HepG2 (cell line): ENCODE measurements at regions of chr6 and their contacts with region 1.

Region 1: DNA sequence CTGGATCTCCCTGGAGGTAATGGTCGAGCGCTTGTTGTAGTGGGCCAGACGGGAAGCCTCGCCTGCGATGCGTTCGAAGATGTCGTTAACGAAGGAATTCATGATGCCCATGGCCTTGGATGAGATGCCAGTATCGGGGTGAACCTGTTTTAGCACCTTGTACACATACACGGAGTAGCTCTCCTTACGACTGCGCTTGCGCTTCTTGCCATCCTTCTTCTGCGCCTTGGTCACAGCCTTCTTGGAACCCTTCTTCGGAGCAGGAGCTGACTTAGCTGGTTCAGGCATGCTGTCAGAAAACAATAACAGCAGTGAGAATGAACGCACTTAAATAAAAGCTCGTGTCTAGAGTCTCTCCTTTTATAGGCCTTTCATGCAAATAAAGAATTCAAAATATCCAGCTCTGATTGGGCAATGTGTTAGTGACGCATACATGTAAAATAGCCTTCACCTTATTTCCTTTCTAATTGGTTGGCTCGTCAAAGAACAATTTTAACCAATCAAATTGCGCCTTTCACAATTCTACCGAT is 129.2 kb downstream of the HFE start:
- DNase-seq: peak; percentile 99
- ATAC-seq: peak; percentile 64
- H3K4me3 ChIP-seq: peak overlapping the region; percentile 60 to 75 (median 72)
- H3K27ac ChIP-seq: peak overlapping the region; percentile 89
- H3K4me1 ChIP-seq: peaks cover 30% of the 10 kb centered on the region
- H3K27me3 ChIP-seq: no peaks in the 10 kb centered on the region; a peak in 1 of 5 replicates
- CTCF ChIP-seq: no peak
- EP300 ChIP-seq: peak in 1 of 2 experiments; percentile 48; a peak in 1 of 4 replicates
- POLR2A ChIP-seq: peak; percentile 97 to 99
- RAD21 ChIP-seq: peak; percentile 26; the same call in 1 of the 2 replicates

Region 2: GRCh38 chr6:26003102-26003694 is 213.2 kb before region 1 on chr6:
- CTCF ChIA-PET with region 1: no interaction called
- POLR2A ChIA-PET with region 1: no interaction called
- in situ Hi-C with region 1: no loop called
- intact Hi-C with region 1: no loop called
- DNase-seq: peak; percentile 63
- ATAC-seq: peak; percentile 82
- H3K4me3 ChIP-seq: no peak overlapping the region
- H3K27ac ChIP-seq: no peak overlapping the region
- H3K4me1 ChIP-seq: no peaks in the 10 kb centered on the region
- H3K27me3 ChIP-seq: no peaks in the 10 kb centered on the region
- CTCF ChIP-seq: peak; percentile 79
- EP300 ChIP-seq: no peak
- POLR2A ChIP-seq: no peak
- RAD21 ChIP-seq: 0 out of 2 replicates have a peak, but pooled peaks have one; percentile 30

Region 3: GRCh38 chr6:26025894-26026832 is 190.3 kb before region 1 on chr6:
- CTCF ChIA-PET with region 1: no interaction called
- POLR2A ChIA-PET with region 1: interaction called, 40 read pairs
- in situ Hi-C with region 1: no loop called
- intact Hi-C with region 1: no loop called
- DNase-seq: peak; percentile 97
- ATAC-seq: peak; percentile 68
- H3K4me3 ChIP-seq: peak overlapping the region; percentile 59 to 80 (median 71)
- H3K27ac ChIP-seq: peak overlapping the region; percentile 93
- H3K4me1 ChIP-seq: peaks cover 62% of the 10 kb centered on the region
- H3K27me3 ChIP-seq: no peaks in the 10 kb centered on the region; a peak in 1 of 5 replicates
- CTCF ChIP-seq: peak; percentile 95
- EP300 ChIP-seq: peak in 1 of 2 experiments; percentile 54; a peak in 2 of 4 replicates
- POLR2A ChIP-seq: peak in 1 of 2 experiments; percentile 28; a peak in 1 of 4 replicates
- RAD21 ChIP-seq: peak; percentile 77

Region 4: GRCh38 chr6:26103770-26104456 is 112.5 kb before region 1 on chr6:
- CTCF ChIA-PET with region 1: no interaction called
- POLR2A ChIA-PET with region 1: interaction called, 46 read pairs
- in situ Hi-C with region 1: no loop called
- intact Hi-C with region 1: no loop called
- DNase-seq: peak; percentile 96
- ATAC-seq: peak; percentile 84
- H3K4me3 ChIP-seq: peak overlapping the region; percentile 64 to 79 (median 74)
- H3K27ac ChIP-seq: peak overlapping the region; percentile 92
- H3K4me1 ChIP-seq: peaks cover 29% of the 10 kb centered on the region
- H3K27me3 ChIP-seq: no peaks in the 10 kb centered on the region; a peak in 1 of 5 replicates
- CTCF ChIP-seq: peak; percentile 45
- EP300 ChIP-seq: peak; percentile 69 to 96; a peak in 3 of 4 replicates
- POLR2A ChIP-seq: peak; percentile 98 to 99
- RAD21 ChIP-seq: peak; percentile 52; the same call in 1 of the 2 replicates

Region 5: GRCh38 chr6:26187981-26188635 is 28.3 kb before region 1 on chr6:
- CTCF ChIA-PET with region 1: no interaction called
- POLR2A ChIA-PET with region 1: interaction called, 53 read pairs
- in situ Hi-C with region 1: no loop called
- intact Hi-C with region 1: no loop called
- DNase-seq: peak; percentile 76
- ATAC-seq: peak; percentile 63
- H3K4me3 ChIP-seq: peak overlapping the region; percentile 60 to 77 (median 62)
- H3K27ac ChIP-seq: peak overlapping the region; percentile 82
- H3K4me1 ChIP-seq: peaks cover 18% of the 10 kb centered on the region
- H3K27me3 ChIP-seq: no peaks in the 10 kb centered on the region
- CTCF ChIP-seq: no peak
- EP300 ChIP-seq: no peak
- POLR2A ChIP-seq: no peak
- RAD21 ChIP-seq: no peak

Region 6: GRCh38 chr6:26258200-26258977 is 42.0 kb after region 1 on chr6:
- CTCF ChIA-PET with region 1: no interaction called
- POLR2A ChIA-PET with region 1: interaction called, 14 read pairs
- in situ Hi-C with region 1: no loop called
- intact Hi-C with region 1: loop called (anchors 2 kb)
- DNase-seq: peak; percentile 47
- ATAC-seq: peak; percentile 55
- H3K4me3 ChIP-seq: peak overlapping the region; percentile 26 to 54 (median 43); a peak in 4 of 6 replicates
- H3K27ac ChIP-seq: peak overlapping the region; percentile 46
- H3K4me1 ChIP-seq: peaks cover 69% of the 10 kb centered on the region
- H3K27me3 ChIP-seq: no peaks in the 10 kb centered on the region
- CTCF ChIP-seq: peak; percentile 59
- EP300 ChIP-seq: no peak
- POLR2A ChIP-seq: no peak
- RAD21 ChIP-seq: no peak

Region 7: DNA sequence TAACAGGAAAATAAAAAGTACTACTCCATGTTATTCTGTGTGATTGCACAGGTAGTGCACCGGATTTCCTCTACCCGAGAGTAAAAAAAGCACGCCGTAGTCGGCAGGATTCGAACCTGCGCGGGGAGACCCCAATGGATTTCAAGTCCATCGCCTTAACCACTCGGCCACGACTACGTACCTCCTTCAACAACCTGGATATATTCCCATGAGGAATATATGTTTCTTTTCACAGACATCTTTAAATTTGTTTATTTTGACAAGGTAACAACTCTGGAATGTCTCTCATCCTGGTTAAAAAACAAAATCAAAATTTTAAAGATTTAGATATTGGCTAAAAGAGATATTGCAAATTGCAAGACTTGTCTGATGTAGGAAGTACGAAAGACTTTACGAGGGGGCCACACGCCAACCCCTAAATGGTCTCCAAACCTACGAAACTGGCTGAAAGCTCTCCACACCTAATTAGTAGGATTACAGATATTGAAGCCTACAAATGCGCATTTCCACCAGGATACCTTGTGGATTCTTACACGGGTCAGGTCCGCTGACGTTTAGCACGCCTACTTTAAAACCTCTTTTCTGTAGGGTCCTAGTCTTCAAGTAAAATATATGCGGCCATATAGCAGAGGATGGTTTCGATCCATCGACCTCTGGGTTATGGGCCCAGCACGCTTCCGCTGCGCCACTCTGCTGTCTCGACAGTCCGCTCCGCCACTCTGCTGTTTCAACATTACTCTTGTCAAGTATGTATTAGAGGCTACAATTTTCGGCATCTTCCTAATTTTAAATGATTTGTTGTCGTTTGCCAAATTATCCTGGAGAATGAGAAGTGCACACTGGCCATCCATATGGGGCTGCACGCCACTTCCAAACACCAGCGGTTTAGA is 96.3 kb after region 1 on chr6:
- CTCF ChIA-PET with region 1: no interaction called
- POLR2A ChIA-PET with region 1: interaction called, 7 read pairs
- in situ Hi-C with region 1: no loop called
- intact Hi-C with region 1: loop called (anchors 2 kb)
- DNase-seq: peak; percentile 92
- ATAC-seq: peak; percentile 77
- H3K4me3 ChIP-seq: peak overlapping the region; percentile 67 to 80 (median 67)
- H3K27ac ChIP-seq: peak overlapping the region; percentile 55
- H3K4me1 ChIP-seq: peaks cover 72% of the 10 kb centered on the region
- H3K27me3 ChIP-seq: no peaks in the 10 kb centered on the region
- CTCF ChIP-seq: no peak
- EP300 ChIP-seq: peak in 1 of 2 experiments; percentile 68; a peak in 2 of 4 replicates
- POLR2A ChIP-seq: no peak
- RAD21 ChIP-seq: no peak

Region 8: DNA sequence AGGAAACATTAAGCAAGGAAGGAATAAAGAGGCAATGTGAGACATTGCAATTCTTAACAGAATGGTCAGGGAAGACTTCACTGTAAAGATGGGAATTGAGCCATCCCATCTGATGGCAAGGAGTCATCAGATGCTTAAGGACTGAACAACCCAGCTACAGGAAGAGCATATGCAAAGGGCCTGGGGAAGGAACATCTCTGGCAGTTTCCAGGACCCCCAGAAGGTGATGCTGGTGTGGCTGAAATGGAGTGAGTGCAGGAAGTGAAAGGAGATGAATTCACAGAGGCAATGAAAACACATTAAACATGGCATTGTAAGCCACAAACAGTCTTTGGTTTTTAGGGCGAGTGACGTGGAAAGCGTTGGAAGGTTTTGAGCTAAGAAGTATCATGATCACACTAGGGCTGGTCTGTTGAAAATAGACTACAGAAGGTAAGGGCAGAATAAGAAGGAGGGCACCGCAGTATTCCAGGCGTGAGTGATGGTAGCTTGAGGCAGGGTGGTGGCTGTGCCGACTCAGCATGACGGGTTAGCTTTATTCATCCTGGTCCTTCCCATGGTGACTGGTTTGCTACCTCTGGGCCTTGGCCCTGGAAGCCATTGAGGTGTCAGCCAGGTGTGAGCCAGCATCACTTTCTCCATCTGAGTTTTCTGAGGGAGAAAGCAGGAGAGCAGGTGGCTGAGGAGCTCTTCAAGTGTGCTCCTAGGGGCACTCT is 248.2 kb after region 1 on chr6:
- CTCF ChIA-PET with region 1: no interaction called
- POLR2A ChIA-PET with region 1: no interaction called
- in situ Hi-C with region 1: no loop called
- intact Hi-C with region 1: no loop called
- DNase-seq: no peak
- ATAC-seq: no peak
- H3K4me3 ChIP-seq: no peak overlapping the region
- H3K27ac ChIP-seq: no peak overlapping the region
- H3K4me1 ChIP-seq: peaks cover 18% of the 10 kb centered on the region
- H3K27me3 ChIP-seq: no peaks in the 10 kb centered on the region
- CTCF ChIP-seq: 0 out of 2 replicates have a peak, but pooled peaks have one; percentile 9
- EP300 ChIP-seq: no peak
- POLR2A ChIP-seq: no peak
- RAD21 ChIP-seq: no peak

Region 9: GRCh38 chr6:27893059-27893835 is 1676.8 kb after region 1 on chr6:
- CTCF ChIA-PET with region 1: no interaction called
- POLR2A ChIA-PET with region 1: interaction called, 28 read pairs
- in situ Hi-C with region 1: no loop called
- intact Hi-C with region 1: no loop called
- DNase-seq: peak; percentile 99
- ATAC-seq: peak; percentile 70
- H3K4me3 ChIP-seq: peak overlapping the region; percentile 76 to 85 (median 82)
- H3K27ac ChIP-seq: peak overlapping the region; percentile 96
- H3K4me1 ChIP-seq: peaks cover 45% of the 10 kb centered on the region
- H3K27me3 ChIP-seq: no peaks in the 10 kb centered on the region; a peak in 1 of 5 replicates
- CTCF ChIP-seq: peak; percentile 39; the same call in 1 of the 2 replicates
- EP300 ChIP-seq: peak; percentile 41 to 53; a peak in 2 of 4 replicates
- POLR2A ChIP-seq: peak; percentile 98 to 99
- RAD21 ChIP-seq: peak; percentile 52; the same call in 1 of the 2 replicates